Vagina (tissue), 2 donors: ENCODE measurements at regions of chr16 and their contacts with region 1.

Region 1: DNA sequence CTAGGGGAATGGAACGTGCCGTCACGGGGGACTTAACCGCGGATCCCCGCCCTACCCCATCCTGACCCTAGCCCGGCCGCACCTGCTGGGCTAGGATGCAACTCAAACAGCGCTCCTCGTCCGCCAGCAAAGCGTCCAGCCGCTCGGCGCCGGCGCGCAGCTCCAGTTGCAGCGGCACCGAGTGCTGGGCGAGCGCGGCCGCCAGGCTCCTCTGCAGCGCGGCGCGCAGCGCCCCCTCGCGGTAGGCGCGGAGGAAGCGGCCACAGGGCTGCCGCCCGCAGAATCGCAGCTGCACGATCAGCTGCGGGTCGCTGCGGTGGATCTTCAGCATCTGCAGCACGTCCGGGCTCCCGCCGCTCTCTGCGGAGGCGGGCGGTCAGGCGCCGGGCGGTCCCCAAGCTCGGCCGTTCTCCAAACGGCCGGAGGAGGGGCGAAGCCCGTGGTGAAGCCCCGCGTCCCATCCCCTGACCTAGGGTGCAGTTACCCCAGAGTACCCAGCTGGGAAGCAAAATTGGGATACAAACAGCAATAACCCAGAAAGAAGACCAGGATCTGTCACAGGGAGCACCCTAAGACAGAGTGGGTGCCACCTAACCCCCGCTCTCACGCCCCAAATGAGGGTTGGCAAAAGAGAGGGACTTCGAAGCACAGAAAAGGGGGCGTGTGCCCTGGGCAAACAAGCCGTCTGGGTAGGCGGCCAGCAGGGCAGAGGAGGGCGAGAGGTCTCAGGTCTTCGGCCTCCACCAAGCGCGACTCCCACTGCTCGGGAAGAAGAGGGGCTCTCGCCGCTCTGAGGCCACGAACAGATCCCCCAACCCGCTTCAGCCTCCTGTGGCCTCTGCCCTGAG is 4.2 kb downstream of the TRADD start:
- DNase-seq: no peak
- H3K4me3 ChIP-seq: no peak overlapping the region
- H3K27ac ChIP-seq: no peak overlapping the region
- H3K4me1 ChIP-seq: peaks cover 43% of the 10 kb centered on the region
- H3K27me3 ChIP-seq: no peaks in the 10 kb centered on the region
- CTCF ChIP-seq: peak; percentile 96 to 98 (median 97)
- POLR2A ChIP-seq: no peak

Region 2: DNA sequence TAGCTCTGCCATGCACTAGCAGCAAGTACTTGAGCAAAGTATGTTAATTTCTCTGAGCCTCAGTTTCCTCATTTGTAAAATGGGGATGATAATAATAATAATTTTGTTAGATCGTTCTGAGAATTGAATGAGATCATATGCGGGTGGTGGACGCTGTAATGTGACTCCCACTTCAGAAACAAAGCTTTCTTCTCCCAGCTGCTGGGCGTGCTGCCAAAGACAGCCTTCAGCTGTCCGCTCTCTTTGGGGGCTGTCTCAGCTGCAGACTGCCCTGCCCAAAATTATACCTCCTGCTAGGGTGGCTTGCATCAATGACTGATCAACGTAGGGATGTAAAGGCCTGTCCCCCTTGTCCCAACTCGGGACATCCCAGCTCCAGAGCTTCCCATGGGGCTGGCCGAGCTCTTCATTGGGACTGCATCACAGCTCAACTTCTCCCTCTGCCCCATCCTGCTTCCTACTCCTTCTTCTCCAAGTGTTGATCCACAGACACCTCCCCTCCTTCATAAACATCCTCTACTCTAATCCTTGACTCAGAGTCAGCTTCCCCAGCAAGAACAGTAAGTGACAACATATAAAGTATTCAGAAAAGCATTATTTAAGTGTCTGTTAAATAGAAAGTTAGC is 819.7 kb before region 1 on chr16:
- intact Hi-C with region 1: no loop called
- DNase-seq: no peak
- H3K4me3 ChIP-seq: no peak overlapping the region
- H3K27ac ChIP-seq: no peak overlapping the region
- H3K4me1 ChIP-seq: no peaks in the 10 kb centered on the region
- H3K27me3 ChIP-seq: no peaks in the 10 kb centered on the region
- CTCF ChIP-seq: no peak
- POLR2A ChIP-seq: no peak

Region 3: DNA sequence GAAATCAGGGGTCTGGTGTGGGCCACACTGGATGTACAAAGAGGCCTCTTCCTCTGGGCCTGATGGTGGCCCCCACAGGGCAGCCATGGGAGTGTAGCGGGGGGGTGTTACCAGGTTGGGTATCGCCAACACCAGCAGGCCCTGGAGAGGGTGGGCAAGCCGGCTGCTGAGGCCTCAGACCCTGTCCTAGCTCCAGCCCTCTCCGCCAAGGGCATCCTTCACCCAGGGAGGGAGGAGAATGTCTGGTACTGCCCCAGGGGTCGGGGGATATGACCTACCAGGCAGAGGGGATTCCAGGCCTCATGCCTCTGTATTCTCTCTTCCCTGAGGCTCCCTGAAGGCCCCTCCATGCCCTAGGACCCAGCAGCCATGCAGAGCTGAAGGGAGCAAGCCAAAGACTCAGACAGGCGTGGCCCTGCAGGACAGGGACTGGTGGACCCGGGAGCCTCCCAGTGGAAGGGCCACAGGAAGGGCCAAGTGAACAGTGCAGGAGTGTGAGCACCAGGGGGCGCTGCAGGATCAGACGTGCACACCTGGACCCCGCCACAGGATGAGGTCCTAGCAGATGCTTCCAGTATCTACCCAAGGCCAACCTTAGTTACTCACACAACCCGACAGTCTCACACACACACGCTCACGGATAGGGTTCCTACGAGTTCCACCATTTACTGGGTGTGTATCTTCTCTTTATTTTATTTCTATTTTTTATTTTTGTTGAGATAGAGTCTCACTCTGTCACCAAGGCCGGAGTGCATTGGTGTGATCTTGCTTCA is 178.0 kb before region 1 on chr16:
- intact Hi-C with region 1: loop called (anchors 2 kb)
- DNase-seq: no peak
- H3K4me3 ChIP-seq: no peak overlapping the region
- H3K27ac ChIP-seq: no peak overlapping the region
- H3K4me1 ChIP-seq: no peaks in the 10 kb centered on the region
- H3K27me3 ChIP-seq: no peaks in the 10 kb centered on the region
- CTCF ChIP-seq: peak; percentile 91 to 99 (median 98)
- POLR2A ChIP-seq: no peak

Region 4: GRCh38 chr16:66988197-66988788 is 167.2 kb before region 1 on chr16 and contains the start of gene CES4A:
- intact Hi-C with region 1: no loop called
- DNase-seq: no peak
- H3K4me3 ChIP-seq: no peak within 1 kb of the TSS
- H3K27ac ChIP-seq: no peak within 1 kb of the TSS
- H3K4me1 ChIP-seq: no peaks in the 10 kb centered on the region
- H3K27me3 ChIP-seq: no peaks in the 10 kb centered on the region
- CTCF ChIP-seq: no peak
- POLR2A ChIP-seq: no peak
- total RNA-seq, gene CES4A: 12.5 TPM

Region 5: DNA sequence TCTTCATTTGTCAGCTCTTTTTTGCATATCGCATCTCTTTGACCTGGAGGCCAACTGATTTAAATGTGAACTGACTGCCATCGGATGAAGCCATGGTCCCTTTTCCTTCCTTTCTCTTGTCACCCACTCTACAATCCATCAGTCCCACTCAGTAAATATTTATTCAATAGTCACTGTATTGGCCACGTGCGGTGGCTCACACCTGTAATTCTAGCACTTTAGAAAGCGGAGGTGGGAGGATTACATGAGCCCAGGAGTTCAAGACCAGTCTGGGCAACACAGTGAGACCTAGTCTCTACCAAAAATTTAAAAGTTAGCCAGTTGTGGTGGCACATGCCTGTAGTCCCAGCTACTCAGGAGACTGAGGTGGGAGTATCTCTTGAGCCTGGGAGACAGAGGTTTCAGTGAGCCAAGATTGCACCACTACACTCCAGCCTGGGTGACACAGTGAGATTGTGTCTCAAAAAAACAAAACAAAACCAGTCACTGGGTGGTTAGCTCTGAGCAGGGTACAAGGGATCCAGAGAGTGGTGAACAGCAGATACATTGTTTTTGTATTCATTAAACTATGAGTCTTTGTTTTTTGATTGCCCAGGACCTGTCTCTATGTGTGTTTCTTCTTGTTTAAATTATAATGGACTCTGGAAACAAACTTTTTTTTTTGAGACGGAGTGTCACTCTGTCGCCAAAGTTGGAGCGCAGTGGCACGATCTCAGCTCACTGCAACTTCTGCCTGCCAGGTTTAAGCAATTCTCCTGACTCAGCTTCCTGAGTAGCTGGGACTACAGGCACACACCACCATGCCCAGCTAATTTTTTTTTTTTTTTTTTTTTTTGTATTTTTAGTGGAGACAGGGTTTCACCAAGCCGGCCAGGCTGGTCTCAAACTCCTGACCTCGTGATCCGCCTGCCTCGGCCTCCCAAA is 38.9 kb before region 1 on chr16:
- intact Hi-C with region 1: no loop called
- DNase-seq: no peak
- H3K4me3 ChIP-seq: no peak overlapping the region
- H3K27ac ChIP-seq: no peak overlapping the region
- H3K4me1 ChIP-seq: peaks cover 22% of the 10 kb centered on the region
- H3K27me3 ChIP-seq: no peaks in the 10 kb centered on the region
- CTCF ChIP-seq: no peak
- POLR2A ChIP-seq: no peak

Region 6: DNA sequence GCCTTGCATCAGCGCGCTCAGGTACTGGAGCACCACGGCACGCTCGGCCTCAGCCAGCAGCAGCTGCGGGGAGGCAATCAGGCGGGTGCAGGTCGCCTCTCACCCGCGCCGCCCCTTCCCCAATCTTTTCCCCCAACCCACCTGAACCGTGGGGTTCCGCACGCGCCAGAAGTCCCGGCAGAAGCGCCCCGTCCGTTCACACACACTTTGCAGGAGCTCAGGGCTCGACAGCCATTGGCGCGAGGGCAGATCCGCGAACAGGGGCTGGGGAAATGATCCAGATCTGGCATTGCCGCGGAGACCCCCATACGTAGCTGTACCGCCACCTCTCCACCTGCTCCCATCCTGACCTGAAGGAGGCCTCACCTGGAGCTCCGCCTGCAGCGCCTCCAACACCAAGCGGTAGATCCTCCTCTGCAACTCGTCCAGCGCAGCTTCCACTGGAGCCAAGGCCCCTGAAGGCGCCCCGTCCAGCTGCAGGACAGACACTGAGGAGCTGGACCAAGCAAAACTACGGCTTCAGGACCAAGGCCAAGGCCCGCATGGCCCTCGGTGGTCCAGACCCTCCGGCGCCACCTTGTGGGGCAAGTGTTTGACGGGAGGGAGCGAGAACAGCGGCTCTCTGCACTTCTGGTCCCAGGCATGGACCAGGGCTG is 29.6 kb after region 1 on chr16:
- intact Hi-C with region 1: loop called (anchors 5 kb)
- DNase-seq: no peak
- H3K4me3 ChIP-seq: peak overlapping the region; percentile 53 to 62
- H3K27ac ChIP-seq: peak overlapping the region; percentile 88
- H3K4me1 ChIP-seq: peaks cover 27% of the 10 kb centered on the region
- H3K27me3 ChIP-seq: no peaks in the 10 kb centered on the region
- CTCF ChIP-seq: peak; percentile 65 to 84 (median 73)
- POLR2A ChIP-seq: no peak

Region 7: GRCh38 chr16:67393035-67393787 is 237.7 kb after region 1 on chr16 and contains the start of gene TPPP3:
- intact Hi-C with region 1: no loop called
- DNase-seq: peak in 1 of 2 donors; percentile 91
- H3K4me3 ChIP-seq: peak within 1 kb of the TSS; percentile 43 to 62
- H3K27ac ChIP-seq: peak within 1 kb of the TSS; percentile 65
- H3K4me1 ChIP-seq: peaks cover 72% of the 10 kb centered on the region
- H3K27me3 ChIP-seq: no peaks in the 10 kb centered on the region
- CTCF ChIP-seq: peak in 1 of 3 experiments; percentile 12
- POLR2A ChIP-seq: no peak
- total RNA-seq, gene TPPP3: 28.2 TPM